Activated CD4-positive, alpha-beta T cell treated with anti-CD3 and anti-CD28 coated beads, Interleukin-2, amount 10 ng/mL, durations not matched to agents 24 days and 14 days (primary cell): ENCODE measurements at regions of chr4 and their contacts with region 1.

Region 1: GRCh38 chr4:168917138-168917779 is 92.8 kb downstream of the CBR4 start:
- DNase-seq: peak; percentile 62
- H3K4me3 Mint-ChIP-seq: no peak overlapping the region
- H3K27ac Mint-ChIP-seq: no peak overlapping the region
- H3K4me1 Mint-ChIP-seq: no peaks in the 10 kb centered on the region
- H3K27me3 Mint-ChIP-seq: no peaks in the 10 kb centered on the region

Region 2: GRCh38 chr4:168109527-168109926 is 807.7 kb before region 1 on chr4:
- intact Hi-C with region 1: no loop called
- DNase-seq: no peak
- H3K4me3 Mint-ChIP-seq: no peak overlapping the region
- H3K27ac Mint-ChIP-seq: no peak overlapping the region
- H3K4me1 Mint-ChIP-seq: no peaks in the 10 kb centered on the region
- H3K27me3 Mint-ChIP-seq: peaks cover 5% of the 10 kb centered on the region

Region 3: DNA sequence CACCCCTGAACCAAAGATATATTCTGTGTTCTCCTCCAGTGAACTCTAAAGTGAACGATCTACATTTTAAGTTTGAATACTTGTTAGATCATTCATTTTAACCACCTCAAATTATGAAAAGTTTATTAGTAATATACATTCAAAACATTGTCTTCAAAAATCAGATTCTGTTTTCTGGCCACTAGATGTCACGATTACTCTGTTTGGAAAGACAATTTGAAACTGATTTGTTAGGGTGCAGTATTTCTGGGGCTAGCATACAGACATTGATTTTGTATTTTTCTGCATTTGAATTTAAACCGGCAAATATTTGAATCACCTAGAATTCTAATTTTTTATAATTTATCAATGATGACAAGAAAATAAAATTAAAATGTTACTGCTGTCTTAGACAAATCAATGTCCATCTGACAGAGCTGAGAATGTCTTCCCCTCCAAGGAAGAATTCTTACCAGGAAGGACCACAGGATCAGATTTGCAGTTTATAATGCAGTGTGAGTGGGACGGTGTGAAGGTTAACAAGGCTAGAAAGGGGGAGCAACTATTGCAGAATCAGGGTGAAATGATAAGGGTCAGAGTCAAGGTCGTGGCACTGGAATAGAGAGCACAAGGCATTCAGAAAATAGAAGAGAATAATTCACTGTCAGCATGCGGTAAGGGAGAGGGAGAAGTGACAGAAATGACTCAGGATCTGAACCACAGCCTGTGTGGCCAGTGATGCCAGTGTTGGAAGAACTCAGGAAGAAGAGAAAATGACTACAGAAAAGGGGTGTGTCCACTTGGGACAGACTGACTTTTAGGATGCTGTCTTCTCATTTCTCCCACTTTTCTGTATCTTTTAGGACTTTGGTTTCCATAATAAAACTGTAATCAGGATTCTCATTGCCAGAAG is 733.3 kb before region 1 on chr4:
- intact Hi-C with region 1: loop called (anchors 2 kb)
- DNase-seq: no peak
- H3K4me3 Mint-ChIP-seq: no peak overlapping the region
- H3K27ac Mint-ChIP-seq: no peak overlapping the region
- H3K4me1 Mint-ChIP-seq: peaks cover 5% of the 10 kb centered on the region
- H3K27me3 Mint-ChIP-seq: no peaks in the 10 kb centered on the region

Region 4: GRCh38 chr4:168710353-168710946 is 206.8 kb before region 1 on chr4:
- intact Hi-C with region 1: loop called (anchors 2 kb)
- DNase-seq: peak; percentile 61
- H3K4me3 Mint-ChIP-seq: no peak overlapping the region
- H3K27ac Mint-ChIP-seq: no peak overlapping the region
- H3K4me1 Mint-ChIP-seq: peaks cover 11% of the 10 kb centered on the region
- H3K27me3 Mint-ChIP-seq: peaks cover 6% of the 10 kb centered on the region

Region 5: GRCh38 chr4:168877511-168878491 is 39.5 kb before region 1 on chr4:
- intact Hi-C with region 1: loop called (anchors 5 kb)
- DNase-seq: peak; percentile 80
- H3K4me3 Mint-ChIP-seq: peak overlapping the region; percentile 84
- H3K27ac Mint-ChIP-seq: peak overlapping the region; percentile 65
- H3K4me1 Mint-ChIP-seq: peaks cover 20% of the 10 kb centered on the region
- H3K27me3 Mint-ChIP-seq: peaks cover 43% of the 10 kb centered on the region

Region 6: GRCh38 chr4:169566021-169566818 is 649.0 kb after region 1 on chr4:
- intact Hi-C with region 1: loop called (anchors 2 kb)
- DNase-seq: peak; percentile 77
- H3K4me3 Mint-ChIP-seq: no peak overlapping the region
- H3K27ac Mint-ChIP-seq: no peak overlapping the region
- H3K4me1 Mint-ChIP-seq: peaks cover 6% of the 10 kb centered on the region
- H3K27me3 Mint-ChIP-seq: no peaks in the 10 kb centered on the region